ENCODE measurements at regions of chr14 and their contacts with region 1.

Region 1: DNA sequence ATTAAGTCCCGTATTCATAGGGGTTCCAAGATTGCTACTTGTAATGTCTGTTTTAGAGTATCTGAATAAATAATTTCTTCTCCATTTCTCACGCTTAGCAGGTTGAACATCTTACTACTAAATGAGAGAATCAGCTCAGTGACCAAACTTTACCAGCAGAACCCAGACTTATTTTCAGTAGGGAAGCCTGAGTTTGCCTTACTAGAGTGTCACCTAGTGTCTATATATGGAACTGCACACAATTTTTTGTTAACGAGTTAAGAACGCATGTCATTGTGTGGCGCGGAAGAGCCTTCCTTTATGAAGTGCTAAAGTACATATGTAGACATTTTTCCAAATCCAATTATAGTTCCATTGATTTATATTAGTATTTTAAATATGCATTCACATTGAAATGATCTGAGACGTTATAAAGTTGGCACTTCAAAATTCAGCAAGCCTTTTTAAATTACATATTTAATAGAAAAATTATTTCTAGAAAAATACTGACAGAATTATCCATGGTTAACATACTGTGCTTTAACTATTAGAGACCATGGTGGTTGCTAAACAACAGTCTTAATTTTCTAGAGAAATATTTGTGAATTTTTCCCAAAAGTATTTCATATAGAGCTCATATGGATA is 88.3 kb downstream of the RPS29 start:
- DNase-seq: peak in 1 of 2 donors; percentile 75
- ATAC-seq: peak; percentile 77 to 87 (median 87)
- H3K4me3 ChIP-seq: no peak overlapping the region
- H3K4me3 Mint-ChIP-seq: no peak overlapping the region
- H3K27ac ChIP-seq: no peak overlapping the region
- H3K27ac Mint-ChIP-seq: no peak overlapping the region
- H3K4me1 ChIP-seq: no peaks in the 10 kb centered on the region
- H3K4me1 Mint-ChIP-seq: no peaks in the 10 kb centered on the region
- H3K27me3 ChIP-seq: no peaks in the 10 kb centered on the region
- H3K27me3 Mint-ChIP-seq: peaks cover 11 to 13% of the 10 kb centered on the region in 2 donors
- CTCF ChIP-seq: peak; percentile 94

Region 2: DNA sequence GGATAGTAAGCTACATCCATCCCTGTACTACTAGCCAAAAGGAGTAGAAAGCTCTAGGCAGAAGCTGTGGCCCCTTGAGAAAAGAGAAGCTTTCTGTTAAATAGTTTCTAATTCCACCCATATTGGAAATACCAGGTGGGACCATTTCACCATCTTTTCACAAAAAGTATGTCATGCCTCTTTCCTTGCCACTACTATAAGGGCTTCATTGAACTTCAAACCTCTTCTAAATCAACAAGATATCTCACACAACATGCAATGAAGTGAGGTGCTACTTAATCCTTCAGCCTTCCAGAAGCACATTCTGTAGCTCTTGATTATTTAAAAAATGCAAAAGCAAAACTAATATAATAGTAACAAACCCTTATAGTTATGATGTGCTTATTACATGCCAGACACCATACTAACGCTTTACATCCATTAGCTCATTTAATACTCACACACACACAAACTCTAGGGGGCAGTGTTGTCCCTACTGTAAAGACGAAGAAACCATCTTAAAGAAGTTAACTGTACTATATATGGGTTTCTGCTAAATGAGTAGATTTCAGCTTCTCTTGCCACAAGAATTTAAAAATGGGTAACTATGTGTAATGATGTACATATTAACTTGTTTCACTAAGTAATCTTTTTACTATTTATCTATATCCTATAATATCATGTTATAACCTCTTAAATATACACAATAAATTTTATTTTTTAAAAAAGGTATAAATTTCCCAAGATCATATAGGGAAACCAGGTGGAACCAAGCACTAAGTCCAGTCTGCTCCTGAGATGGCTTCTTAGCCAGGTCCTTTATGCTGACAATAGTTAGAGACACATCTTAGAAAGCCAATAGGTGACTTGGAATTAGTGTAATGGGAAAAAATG is 36.1 kb before region 1 on chr14:
- intact Hi-C with region 1: loop called (anchors 1 kb)
- DNase-seq: peak in 1 of 2 donors; percentile 88
- ATAC-seq: peak; percentile 76 to 84 (median 83)
- H3K4me3 ChIP-seq: no peak overlapping the region
- H3K4me3 Mint-ChIP-seq: no peak overlapping the region
- H3K27ac ChIP-seq: no peak overlapping the region
- H3K27ac Mint-ChIP-seq: no peak overlapping the region
- H3K4me1 ChIP-seq: no peaks in the 10 kb centered on the region
- H3K4me1 Mint-ChIP-seq: no peaks in the 10 kb centered on the region
- H3K27me3 ChIP-seq: no peaks in the 10 kb centered on the region
- H3K27me3 Mint-ChIP-seq: peaks cover 0 to 10% of the 10 kb centered on the region in 2 donors
- CTCF ChIP-seq: peak; percentile 69